Cardiac septum (tissue), 1 donor: ENCODE measurements at regions of chr12 and their contacts with region 1.

Region 1: DNA sequence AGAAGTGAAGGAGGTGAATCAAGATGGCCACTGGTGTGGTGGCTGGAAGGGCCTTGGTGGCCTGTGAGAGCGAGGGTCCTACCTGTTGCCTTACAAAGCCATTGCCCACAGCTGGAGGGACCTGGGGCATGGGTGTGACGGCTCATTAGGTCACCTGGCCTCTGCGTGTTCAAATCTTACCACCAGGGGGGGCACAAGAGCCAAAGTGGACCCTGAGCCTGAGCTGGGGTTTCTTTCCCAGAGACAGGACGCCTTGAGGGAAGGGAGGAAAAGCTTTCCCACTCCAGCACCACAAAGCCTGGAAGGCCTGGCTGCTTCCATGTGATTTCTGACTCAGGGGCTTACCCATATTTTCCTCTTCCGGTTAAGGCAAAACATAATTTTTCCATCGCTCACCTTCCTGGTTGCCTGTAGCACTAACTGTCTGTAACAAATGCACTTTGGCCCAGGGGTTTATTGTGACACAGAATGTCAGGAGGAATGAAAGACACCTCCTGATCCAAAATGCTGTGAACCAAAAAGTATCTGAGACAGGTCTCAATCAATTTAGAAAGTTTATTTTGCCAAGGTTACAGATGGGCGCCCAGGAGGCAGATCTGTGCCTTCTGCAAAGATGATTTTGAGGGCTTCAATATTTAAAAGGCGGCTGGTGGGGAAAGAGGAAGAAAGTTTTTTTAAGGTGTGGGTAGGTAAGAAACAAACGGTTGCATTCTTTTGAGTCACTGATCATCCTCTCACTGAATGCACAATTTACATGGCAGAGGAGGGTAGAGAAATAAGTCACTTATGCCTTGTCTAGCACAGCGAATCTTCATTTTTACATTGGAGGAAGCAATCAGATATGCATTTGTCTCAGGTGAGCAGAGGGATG is 4.3 kb upstream of the CD9 start:
- DNase-seq: peak; percentile 92

Region 2: GRCh38 chr12:6062757-6063735 is 132.9 kb before region 1 on chr12:
- intact Hi-C with region 1: loop called (anchors 10 kb)
- DNase-seq: peak; percentile 82

Region 3: GRCh38 chr12:6180300-6181051 is 15.4 kb before region 1 on chr12:
- intact Hi-C with region 1: no loop called
- DNase-seq: no peak

Region 4: GRCh38 chr12:6230321-6231110 is 34.6 kb after region 1 on chr12:
- intact Hi-C with region 1: loop called (anchors 5 kb)
- DNase-seq: peak; percentile 89

Region 5: GRCh38 chr12:6323340-6323994 is 127.6 kb after region 1 on chr12:
- intact Hi-C with region 1: no loop called
- DNase-seq: peak; percentile 50

Region 6: DNA sequence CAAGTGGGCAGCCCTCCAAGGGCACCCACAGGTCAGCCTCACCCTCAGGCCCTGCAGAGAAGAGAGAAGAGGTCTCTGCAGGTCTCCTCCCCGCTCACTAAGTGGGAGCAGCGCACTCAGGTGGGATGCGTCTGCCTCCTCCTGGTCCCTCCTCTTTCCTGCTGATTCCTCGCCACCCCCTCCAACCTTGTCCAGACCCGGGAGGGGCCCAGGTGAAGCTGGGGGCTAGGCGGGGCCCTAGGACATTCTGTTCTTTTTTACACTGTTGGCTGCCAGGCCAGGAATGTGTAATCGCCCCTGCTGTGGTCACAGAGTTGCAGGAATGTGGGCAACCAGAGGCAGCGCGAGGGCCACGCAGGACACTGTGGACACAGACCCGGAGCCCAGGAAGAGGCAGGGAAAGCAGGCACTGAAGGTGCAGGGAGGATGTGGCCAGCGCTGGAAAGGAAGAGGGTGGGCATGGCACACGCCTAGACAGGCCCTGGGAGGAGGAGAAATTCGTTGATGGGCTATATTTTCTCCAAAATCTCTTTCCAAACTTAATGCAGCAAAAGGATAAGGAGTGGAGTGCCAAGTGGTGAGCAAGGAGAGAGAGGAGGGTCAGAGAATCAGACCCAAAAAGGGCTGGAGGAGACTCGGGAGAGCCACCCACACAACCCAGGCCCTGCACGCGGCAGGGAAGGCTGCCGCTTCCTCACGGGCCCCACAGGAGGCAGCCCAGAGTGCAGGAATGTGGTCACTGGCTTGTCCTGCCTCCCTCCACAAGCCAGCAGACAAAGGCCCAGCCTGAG is 180.4 kb after region 1 on chr12:
- intact Hi-C with region 1: no loop called
- DNase-seq: peak; percentile 82

Region 7: GRCh38 chr12:6613776-6614512 is 418.0 kb after region 1 on chr12:
- intact Hi-C with region 1: no loop called
- DNase-seq: peak; percentile 92